Dendritic cell treated with granulocyte-macrophage colony-stimulating factor and Interleukin-4, amounts not matched to agents 40 ng/mL and 50 ng/mL, for 4 days (primary cell): ENCODE measurements at regions of chrX and their contacts with region 1.

Region 1: DNA sequence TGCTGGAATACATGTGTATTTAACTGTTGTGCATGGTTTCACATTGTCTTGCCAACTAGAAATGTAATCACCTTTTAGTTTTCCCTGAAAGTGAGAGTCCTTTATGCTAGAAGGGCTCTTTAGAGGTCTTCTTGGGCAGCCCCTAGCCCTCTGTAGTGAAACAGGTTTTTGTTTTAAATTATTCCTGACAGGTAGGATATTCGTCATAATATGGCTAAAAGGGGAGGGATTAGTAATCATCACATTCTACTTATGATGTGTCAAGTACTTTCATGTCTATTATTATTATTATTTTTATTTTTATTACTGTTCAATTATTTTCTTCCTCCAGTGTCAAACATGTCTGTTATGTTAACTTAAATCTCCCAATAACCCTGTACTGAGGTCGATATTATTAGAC is 35.5 kb downstream of the MSN start:
- H3K4me3 Mint-ChIP-seq: no peak overlapping the region
- H3K27ac Mint-ChIP-seq: no peak overlapping the region
- H3K4me1 Mint-ChIP-seq: peaks cover 80% of the 10 kb centered on the region
- H3K27me3 Mint-ChIP-seq: no peaks in the 10 kb centered on the region

Region 2: GRCh38 chrX:65595460-65595876 is 107.5 kb before region 1 on chrX:
- intact Hi-C with region 1: loop called (anchors 5 kb)
- H3K4me3 Mint-ChIP-seq: no peak overlapping the region
- H3K27ac Mint-ChIP-seq: no peak overlapping the region
- H3K4me1 Mint-ChIP-seq: peaks cover 28% of the 10 kb centered on the region
- H3K27me3 Mint-ChIP-seq: no peaks in the 10 kb centered on the region

Region 3: DNA sequence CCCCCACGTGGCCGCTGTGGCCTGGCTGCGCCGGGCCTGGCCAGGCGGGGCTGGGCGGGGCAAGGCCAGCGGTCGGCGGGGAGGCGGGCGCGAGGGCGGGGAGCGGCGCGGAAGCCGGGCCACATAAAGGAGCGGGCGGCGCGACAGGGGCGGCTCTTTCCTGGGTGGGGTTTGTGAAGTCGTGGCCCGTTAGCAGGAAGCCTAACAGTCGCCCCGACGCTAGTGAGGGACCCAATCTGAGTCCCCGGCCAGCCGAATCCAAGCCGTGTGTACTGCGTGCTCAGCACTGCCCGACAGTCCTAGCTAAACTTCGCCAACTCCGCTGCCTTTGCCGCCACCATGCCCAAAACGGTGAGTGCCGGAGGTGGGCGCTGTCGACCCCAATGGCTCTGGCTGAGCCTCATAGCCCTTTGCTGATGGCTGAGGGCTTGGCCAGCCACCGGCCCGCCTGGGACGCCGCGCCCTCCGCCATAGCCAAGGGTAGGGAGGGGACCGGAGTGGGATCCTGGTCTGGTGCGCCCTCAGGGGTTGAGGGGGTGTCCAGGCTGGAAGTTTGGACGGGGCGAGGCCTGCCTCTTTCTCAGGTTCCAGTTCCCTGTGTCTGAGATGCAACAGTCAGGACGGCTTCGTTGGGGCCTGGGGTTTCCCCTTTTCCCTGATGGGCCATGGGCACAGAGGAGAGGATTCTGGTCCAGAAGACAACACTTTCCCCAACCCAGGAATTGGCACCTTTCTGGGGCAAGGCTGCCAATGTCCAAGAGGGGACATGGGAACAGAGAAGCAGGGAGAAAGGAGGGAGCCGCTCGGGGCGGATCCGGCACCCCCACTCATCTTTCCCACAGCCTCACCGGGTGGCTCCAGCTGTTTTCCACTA is 35.2 kb before region 1 on chrX and contains the start of gene MSN:
- intact Hi-C with region 1: loop called (anchors 5 kb)
- H3K4me3 Mint-ChIP-seq: peak within 1 kb of the TSS; percentile 96
- H3K27ac Mint-ChIP-seq: peak within 1 kb of the TSS; percentile 90
- H3K4me1 Mint-ChIP-seq: peaks cover 29% of the 10 kb centered on the region
- H3K27me3 Mint-ChIP-seq: no peaks in the 10 kb centered on the region

Region 4: GRCh38 chrX:65871661-65872311 is 168.8 kb after region 1 on chrX:
- intact Hi-C with region 1: no loop called
- H3K4me3 Mint-ChIP-seq: no peak overlapping the region
- H3K27ac Mint-ChIP-seq: peak overlapping the region; percentile 47
- H3K4me1 Mint-ChIP-seq: peaks cover 5% of the 10 kb centered on the region
- H3K27me3 Mint-ChIP-seq: peaks cover 1% of the 10 kb centered on the region

Region 5: DNA sequence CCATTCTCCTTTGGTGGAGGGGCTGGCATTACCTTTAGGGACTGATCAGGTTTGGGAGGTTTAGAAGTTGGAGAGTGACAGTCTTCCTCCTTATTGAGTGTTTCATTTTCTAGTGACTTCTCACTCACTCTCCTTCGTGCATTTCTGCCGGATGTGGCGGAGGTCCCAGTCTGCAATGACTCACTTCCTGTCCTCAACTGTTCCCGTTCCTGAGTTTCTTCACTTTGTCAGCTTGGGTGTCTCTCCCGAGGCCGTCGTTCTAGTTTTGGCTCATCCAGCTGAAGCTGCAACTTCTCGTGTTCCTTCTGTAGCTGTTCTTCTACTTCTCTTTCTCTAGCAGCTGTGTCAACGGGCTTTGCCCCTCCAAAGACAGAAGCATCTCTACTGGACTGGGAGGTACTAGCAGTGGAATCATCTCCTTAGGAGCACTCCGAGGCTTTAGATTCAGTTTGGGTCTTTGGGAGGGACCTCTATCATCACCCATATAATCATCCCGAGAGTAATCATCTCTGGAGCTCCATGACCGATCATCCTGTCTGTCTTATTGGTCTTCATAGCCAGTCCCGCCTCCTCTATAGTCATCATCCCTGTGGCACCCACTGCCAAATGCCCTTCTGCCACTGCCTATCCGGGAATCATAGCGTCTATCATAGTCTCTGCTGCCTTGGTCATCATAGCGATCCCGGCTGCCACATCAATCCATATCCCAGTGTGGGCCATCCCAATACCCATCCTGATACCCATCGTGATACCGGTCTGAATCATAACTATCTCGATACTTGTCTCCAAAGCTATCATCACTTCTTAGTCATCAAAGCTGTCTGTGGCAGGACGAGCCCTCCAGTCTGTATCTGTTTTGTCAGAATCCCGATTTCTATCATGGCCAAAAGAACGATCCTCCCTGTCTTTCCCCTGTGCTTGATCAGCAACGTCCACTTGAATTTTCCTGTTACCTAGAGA is 372.2 kb after region 1 on chrX:
- intact Hi-C with region 1: no loop called
- H3K4me3 Mint-ChIP-seq: peak overlapping the region; percentile 50
- H3K27ac Mint-ChIP-seq: peak overlapping the region; percentile 84
- H3K4me1 Mint-ChIP-seq: peaks cover 35% of the 10 kb centered on the region
- H3K27me3 Mint-ChIP-seq: no peaks in the 10 kb centered on the region